K562 (cell line): ENCODE measurements at regions of chr15 and their contacts with region 1.

Region 1: DNA sequence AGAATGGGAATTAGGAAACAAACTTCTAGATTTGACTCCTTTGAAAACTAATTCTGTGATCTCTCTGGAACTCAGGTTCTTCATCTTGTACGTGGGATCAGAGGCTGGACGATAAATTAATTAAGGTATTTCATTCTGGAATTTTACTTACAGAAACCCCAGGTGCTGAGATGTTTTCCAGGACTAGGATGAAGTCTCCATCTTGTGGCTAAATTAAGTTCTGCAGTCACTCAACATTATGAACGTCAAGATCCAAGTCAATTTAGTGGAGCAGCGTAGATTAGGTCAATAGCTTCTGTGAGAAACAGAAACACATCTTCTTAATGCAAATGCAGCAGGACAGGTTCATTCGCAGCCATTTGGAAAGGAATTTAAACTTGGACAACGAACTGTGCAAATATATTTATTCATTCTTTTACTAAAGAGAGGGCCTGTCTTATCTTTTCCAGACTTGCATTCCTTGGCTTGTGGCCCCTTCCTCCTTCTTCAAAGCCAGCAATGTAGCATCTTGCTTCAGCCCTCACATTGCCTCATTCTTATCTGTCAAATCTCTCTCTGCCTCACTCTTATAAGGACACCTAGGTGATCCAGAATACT is 26.7 kb upstream of the TMC3 start:
- DNase-seq: peak; percentile 47 to 58 (median 52)
- ATAC-seq: peak; percentile 65
- H3K4me3 ChIP-seq: no peak overlapping the region
- H3K27ac ChIP-seq: no peak overlapping the region
- H3K4me1 ChIP-seq: no peaks in the 10 kb centered on the region
- H3K27me3 ChIP-seq: peaks cover 0 to 2% of the 10 kb centered on the region in 2 experiments; a peak in 2 of 5 replicates
- CTCF ChIP-seq: peak; percentile 60 to 85 (median 66); a peak in 5 of 6 replicates
- EP300 ChIP-seq: no peak
- POLR2A ChIP-seq: no peak
- RAD21 ChIP-seq: peak; percentile 54 to 86

Region 2: DNA sequence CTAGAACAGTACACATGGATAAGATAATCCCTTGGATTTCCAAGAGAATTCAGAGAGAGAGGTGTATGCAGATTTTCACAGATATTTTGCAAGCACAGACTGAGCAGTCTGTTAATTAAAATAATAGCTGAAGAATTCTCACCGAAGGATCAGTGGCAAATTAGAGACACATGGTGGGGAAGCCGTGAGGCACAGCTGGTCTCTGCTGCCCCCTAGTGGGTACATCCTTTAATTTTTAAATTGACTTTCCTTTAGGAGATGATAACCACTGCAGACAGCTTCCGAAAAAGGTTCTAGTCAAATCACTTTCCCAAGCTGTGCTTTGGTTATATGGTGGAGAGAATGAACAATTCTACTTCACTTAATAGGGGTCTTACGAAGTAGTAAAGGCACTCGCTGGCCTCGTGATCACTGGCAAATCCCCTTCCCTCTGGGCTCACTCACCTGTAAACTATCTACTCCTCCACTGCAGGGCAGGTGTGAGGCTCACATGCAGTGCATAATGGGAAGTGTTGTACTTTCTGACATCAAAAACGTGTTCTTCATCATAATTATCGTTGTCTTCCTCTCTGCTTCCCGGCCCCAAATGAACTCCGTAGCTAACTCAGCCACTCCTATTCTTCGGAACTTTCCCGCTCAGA is 430.6 kb before region 1 on chr15:
- CTCF ChIA-PET with region 1: no interaction called
- POLR2A ChIA-PET with region 1: no interaction called
- in situ Hi-C with region 1: loop called (anchors 10 kb)
- intact Hi-C with region 1: no loop called
- DNase-seq: peak; percentile 66 to 81 (median 70)
- ATAC-seq: peak; percentile 87
- H3K4me3 ChIP-seq: no peak overlapping the region
- H3K27ac ChIP-seq: no peak overlapping the region
- H3K4me1 ChIP-seq: no peaks in the 10 kb centered on the region
- H3K27me3 ChIP-seq: no peaks in the 10 kb centered on the region
- CTCF ChIP-seq: peak; percentile 79 to 95 (median 86)
- EP300 ChIP-seq: no peak
- POLR2A ChIP-seq: no peak
- RAD21 ChIP-seq: peak; percentile 87 to 92

Region 3: DNA sequence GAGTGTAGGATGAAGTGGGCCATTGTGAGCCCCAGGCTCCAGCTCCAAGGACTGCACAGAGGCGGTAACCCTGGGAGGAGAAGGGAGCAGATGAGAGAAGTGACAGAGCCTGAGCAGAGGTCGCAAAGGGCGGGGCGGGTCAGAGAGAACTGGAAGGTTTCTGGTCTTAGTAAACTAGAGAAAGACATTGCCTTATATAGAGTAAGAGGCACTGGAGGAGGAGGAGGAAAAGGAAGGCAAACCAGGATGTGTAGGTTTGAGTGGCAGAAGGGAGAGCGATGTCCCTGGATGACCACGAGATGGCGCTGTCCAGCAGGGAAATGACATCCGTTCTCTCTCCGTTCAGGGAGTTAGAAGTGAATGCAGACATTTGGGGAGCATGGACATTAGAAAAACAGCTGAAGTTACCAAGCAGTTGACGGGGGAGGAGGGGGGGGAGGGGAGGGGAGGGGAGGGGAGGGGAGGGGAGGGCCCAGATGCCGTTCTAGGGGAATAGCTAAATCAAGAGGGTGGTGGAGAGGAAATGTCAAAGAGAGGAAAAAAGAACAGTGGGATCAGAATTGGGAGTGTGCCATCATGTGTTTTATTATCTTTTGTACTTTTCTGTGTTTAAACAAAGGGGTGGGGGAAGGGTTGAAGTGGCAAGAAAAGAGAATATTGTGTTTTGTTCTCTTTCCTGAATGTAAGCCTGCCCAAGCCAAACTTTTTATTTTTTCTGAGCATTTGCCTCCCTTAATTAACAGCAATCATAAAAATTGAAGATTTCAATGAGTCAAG is 125.6 kb before region 1 on chr15:
- CTCF ChIA-PET with region 1: interaction called, 21 read pairs
- POLR2A ChIA-PET with region 1: no interaction called
- in situ Hi-C with region 1: loop called (anchors 5 kb)
- intact Hi-C with region 1: loop called (anchors 1 kb)
- DNase-seq: peak; percentile 75 to 86 (median 76)
- ATAC-seq: peak; percentile 98
- H3K4me3 ChIP-seq: no peak overlapping the region
- H3K27ac ChIP-seq: no peak overlapping the region
- H3K4me1 ChIP-seq: no peaks in the 10 kb centered on the region; a peak in 1 of 5 replicates
- H3K27me3 ChIP-seq: no peaks in the 10 kb centered on the region
- CTCF ChIP-seq: peak; percentile 84 to 94 (median 87)
- EP300 ChIP-seq: no peak
- POLR2A ChIP-seq: no peak
- RAD21 ChIP-seq: peak; percentile 70 to 85

Region 4: DNA sequence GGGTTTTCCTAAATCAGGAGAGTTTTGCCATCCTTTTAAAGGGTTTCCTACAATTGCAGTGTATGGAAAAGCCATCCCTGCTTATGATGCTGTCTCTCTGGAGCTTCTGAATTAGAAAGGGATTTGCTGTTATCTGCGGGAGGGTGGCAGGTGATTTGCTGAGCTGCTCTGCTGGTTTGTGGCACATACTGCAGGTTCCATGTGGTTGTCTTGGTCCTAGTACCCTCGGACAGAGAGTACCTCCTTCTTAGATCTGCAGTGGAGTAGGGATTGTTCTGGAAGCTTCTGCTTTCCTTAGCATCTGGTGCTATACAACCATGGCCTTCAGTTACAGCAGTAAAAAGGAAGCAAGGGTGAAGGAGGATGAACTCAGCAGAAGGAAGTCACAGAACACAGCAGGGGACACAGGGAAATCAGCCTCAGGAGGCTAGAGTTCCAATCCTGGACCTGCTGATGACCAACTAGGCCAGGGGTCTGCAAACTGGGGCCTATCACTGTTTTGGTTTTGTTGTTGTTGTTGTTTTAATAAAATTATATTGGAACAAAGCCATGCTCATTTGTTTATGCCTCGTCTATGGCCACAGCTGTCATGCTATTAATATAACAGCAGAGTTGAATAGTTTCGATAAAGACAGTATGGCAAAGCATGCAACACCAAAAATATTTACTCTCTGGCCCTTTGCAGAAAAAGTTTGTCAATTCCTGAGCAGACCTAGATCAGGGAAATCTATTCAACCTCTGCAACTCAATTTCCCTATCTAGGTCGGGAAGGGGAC is 116.3 kb before region 1 on chr15:
- CTCF ChIA-PET with region 1: no interaction called
- POLR2A ChIA-PET with region 1: no interaction called
- in situ Hi-C with region 1: loop called (anchors 5 kb)
- intact Hi-C with region 1: no loop called
- DNase-seq: no peak
- ATAC-seq: no peak
- H3K4me3 ChIP-seq: no peak overlapping the region
- H3K27ac ChIP-seq: no peak overlapping the region
- H3K4me1 ChIP-seq: no peaks in the 10 kb centered on the region
- H3K27me3 ChIP-seq: no peaks in the 10 kb centered on the region
- CTCF ChIP-seq: no peak
- EP300 ChIP-seq: no peak
- POLR2A ChIP-seq: no peak
- RAD21 ChIP-seq: no peak

Region 5: DNA sequence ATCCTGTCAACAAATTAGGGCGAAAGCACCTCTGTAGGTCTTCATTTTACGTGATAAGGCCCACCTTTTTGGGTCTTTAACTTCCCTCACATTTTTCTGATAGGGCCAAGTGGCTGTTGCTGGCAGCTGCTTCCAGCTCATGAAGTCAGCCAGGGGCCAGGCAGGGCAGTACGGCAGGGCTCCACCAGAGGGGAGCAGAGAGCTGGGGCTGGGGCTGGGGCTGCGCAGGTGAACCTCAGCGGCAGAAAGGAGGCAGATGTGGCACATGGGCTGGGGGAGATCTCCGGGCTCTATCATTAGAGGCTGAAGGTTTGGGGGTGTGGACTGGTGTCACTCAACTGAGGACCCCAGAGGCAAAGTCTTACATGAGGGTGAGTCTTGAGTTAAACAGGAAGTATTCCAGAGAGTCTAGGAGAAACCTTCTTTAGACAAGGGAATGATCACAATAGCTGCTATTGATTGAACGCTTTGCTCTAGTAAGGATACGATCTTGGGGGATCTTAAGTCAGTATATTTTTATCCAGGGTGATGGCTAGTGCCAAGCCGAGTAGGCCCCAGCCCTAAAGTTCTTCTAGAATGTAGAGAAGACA is 707.8 kb after region 1 on chr15:
- CTCF ChIA-PET with region 1: no interaction called
- POLR2A ChIA-PET with region 1: no interaction called
- in situ Hi-C with region 1: no loop called
- intact Hi-C with region 1: loop called (anchors 10 kb)
- DNase-seq: peak; percentile 78 to 88 (median 85)
- ATAC-seq: peak; percentile 97
- H3K4me3 ChIP-seq: no peak overlapping the region
- H3K27ac ChIP-seq: no peak overlapping the region
- H3K4me1 ChIP-seq: peaks cover 5 to 15% of the 10 kb centered on the region in 2 experiments; a peak in 4 of 5 replicates
- H3K27me3 ChIP-seq: peaks cover 8 to 17% of the 10 kb centered on the region in 2 experiments; a peak in 4 of 5 replicates
- CTCF ChIP-seq: peak; percentile 86 to 98 (median 87)
- EP300 ChIP-seq: no peak
- POLR2A ChIP-seq: no peak
- RAD21 ChIP-seq: peak; percentile 79 to 92